A673 (cell line): ENCODE measurements at regions of chr18 and their contacts with region 1.

Region 1: DNA sequence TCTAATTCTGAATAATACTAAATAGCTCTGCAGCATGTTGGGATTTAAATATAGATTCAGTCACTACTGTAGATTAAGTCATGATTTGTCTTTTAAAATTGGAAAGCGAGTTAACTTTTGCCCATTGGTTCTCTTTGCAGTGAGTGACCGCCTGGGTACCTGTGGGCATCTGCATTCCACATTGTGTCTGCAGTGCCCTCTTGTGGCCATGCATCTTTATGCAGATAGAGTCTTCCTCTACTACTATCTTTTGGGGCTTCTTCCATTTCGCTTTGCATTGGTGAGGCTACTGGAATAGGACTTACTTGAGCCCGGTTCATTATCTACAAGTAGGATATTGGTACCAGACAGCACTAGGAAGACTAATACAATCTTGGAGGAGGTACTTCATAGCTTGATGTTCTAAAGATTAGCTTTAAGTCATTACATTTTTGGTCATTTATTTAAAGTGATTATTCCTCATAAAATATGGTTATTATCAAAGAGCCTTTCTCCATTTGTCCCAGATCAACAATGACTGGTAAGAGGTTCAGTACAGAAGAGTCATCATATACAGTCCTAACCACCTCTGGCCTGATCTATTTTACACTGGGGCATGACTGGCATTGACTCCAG is 203.0 kb downstream of the SOCS6 start:
- DNase-seq: peak; percentile 66
- H3K4me3 ChIP-seq: no peak overlapping the region
- H3K27ac ChIP-seq: no peak overlapping the region
- H3K4me1 ChIP-seq: peaks cover 46% of the 10 kb centered on the region
- H3K27me3 ChIP-seq: no peaks in the 10 kb centered on the region
- CTCF ChIP-seq: peak; percentile 92

Region 2: GRCh38 chr18:68817584-68817983 is 1674.3 kb before region 1 on chr18:
- CTCF ChIA-PET with region 1: no interaction called
- POLR2A ChIA-PET with region 1: interaction called, 10 read pairs
- intact Hi-C with region 1: no loop called
- DNase-seq: no peak
- H3K4me3 ChIP-seq: no peak overlapping the region
- H3K27ac ChIP-seq: no peak overlapping the region
- H3K4me1 ChIP-seq: no peaks in the 10 kb centered on the region
- H3K27me3 ChIP-seq: no peaks in the 10 kb centered on the region
- CTCF ChIP-seq: no peak

Region 3: DNA sequence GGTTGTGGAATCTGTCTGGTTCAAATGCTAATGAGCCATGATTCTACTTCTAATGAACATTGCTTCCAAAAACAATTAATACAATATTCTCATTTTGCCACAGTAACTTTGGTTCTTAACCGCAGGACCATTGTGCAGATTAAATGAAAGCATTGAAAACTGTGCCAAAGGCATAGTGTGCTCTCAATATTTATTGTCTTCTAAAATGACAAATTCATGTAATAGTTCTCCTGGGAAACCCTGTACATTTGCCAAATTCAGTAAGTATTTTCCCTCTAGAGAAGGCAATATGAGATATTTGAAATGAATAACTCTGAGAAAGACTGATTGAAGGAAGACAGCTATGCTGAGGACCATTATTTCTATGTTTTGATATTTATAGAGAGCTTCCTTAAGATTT is 1447.6 kb before region 1 on chr18:
- CTCF ChIA-PET with region 1: no interaction called
- POLR2A ChIA-PET with region 1: no interaction called
- intact Hi-C with region 1: no loop called
- DNase-seq: no peak
- H3K4me3 ChIP-seq: no peak overlapping the region
- H3K27ac ChIP-seq: no peak overlapping the region
- H3K4me1 ChIP-seq: peaks cover under 1% of the 10 kb centered on the region
- H3K27me3 ChIP-seq: no peaks in the 10 kb centered on the region
- CTCF ChIP-seq: no peak

Region 4: DNA sequence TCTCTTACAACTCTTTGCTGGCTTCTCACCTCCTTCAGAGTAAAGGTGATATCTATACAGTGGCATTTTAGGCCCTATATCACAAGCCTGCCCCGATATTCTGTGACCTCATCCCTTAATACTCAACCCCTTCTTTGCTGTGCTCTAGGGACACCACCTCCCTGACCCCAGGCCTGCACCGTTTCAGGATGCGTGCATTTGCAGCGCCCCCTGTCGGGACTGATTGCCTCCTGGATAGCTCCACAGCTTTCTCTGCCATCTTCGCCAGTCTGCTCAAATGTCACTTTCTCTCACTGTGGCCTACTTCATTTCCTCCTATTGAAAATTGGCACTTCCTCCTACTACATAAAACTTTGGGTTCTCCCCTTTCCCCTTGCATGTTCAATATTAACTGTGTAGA is 86.6 kb after region 1 on chr18:
- CTCF ChIA-PET with region 1: no interaction called
- POLR2A ChIA-PET with region 1: no interaction called
- intact Hi-C with region 1: loop called (anchors 5 kb)
- DNase-seq: peak; percentile 32
- H3K4me3 ChIP-seq: no peak overlapping the region
- H3K27ac ChIP-seq: no peak overlapping the region
- H3K4me1 ChIP-seq: peaks cover 30% of the 10 kb centered on the region
- H3K27me3 ChIP-seq: no peaks in the 10 kb centered on the region
- CTCF ChIP-seq: peak; percentile 51

Region 5: DNA sequence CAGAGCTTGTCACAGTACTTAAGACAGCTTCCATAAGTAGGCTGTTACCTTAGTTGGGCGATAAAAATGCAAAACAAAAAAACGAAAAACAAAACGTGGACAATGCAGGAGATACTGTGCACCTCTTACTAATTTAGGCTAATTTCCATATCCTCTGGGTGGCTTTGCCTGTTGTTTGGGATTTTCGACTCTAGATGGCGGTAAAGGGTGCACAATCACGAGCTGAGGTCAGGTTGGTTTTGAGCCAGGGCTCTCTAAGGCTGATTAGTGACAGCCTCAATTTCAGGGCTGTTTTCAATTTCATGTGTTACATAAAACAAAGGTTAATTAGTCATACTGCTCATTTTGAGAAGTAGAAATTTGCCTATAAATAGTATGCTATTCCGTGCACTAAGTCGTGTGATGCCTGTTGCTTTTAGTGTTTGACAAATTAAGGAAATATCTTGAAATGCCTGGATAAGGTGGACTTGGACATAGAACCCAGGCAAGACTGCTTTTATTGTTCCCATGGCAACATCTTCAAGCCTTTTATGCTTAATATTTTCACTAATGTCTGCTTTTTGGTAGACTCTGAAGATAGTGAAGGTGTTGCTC is 290.1 kb after region 1 on chr18:
- CTCF ChIA-PET with region 1: interaction called, 3 read pairs
- POLR2A ChIA-PET with region 1: no interaction called
- intact Hi-C with region 1: loop called (anchors 5 kb)
- DNase-seq: peak; percentile 84
- H3K4me3 ChIP-seq: no peak overlapping the region
- H3K27ac ChIP-seq: no peak overlapping the region
- H3K4me1 ChIP-seq: peaks cover 6% of the 10 kb centered on the region
- H3K27me3 ChIP-seq: no peaks in the 10 kb centered on the region
- CTCF ChIP-seq: peak; percentile 87

Region 6: DNA sequence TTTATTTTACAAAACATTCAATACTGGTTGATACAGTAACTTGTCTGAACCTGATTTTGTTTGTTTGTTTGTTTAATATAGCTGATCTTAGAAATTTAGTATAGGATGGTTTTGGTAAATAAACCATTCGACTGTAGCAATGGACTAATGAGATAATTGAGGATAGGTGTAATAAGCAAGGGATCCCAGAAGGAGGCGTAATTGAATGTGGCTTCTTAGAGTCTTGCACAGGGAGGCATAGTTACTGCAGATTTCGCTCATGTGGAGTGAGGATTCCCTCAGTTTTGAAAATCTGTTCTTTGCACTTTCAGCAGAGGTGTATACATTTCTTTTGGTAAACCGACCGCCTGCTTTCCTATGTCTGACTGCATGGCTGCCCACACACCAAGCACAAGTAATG is 506.6 kb after region 1 on chr18:
- CTCF ChIA-PET with region 1: no interaction called
- POLR2A ChIA-PET with region 1: no interaction called
- intact Hi-C with region 1: loop called (anchors 5 kb)
- DNase-seq: peak; percentile 33
- H3K4me3 ChIP-seq: no peak overlapping the region
- H3K27ac ChIP-seq: no peak overlapping the region
- H3K4me1 ChIP-seq: peaks cover 25% of the 10 kb centered on the region
- H3K27me3 ChIP-seq: no peaks in the 10 kb centered on the region
- CTCF ChIP-seq: peak; percentile 54